ENCODE measurements at regions of chr11 and their contacts with region 1.

Region 1: GRCh38 chr11:117205211-117205818 is 6.1 kb downstream of the TAGLN start:
- DNase-seq: peak in 1 of 5 donors; percentile 42
- ATAC-seq: no peak
- H3K4me3 ChIP-seq: no peak overlapping the region
- H3K27ac ChIP-seq: peak overlapping the region in 5 of 12 donors; percentile 30 to 95 (median 62)
- H3K4me1 ChIP-seq: peaks cover 0 to 42% (median 15%) of the 10 kb centered on the region in 12 donors
- H3K27me3 ChIP-seq: no peaks in the 10 kb centered on the region
- CTCF ChIP-seq: no peak
- POLR2A ChIP-seq: no peak

Region 2: GRCh38 chr11:117127171-117127901 is 78.0 kb before region 1 on chr11:
- intact Hi-C with region 1: loop called in 5 of 10 experiments (anchors 2 to 5 kb)
- DNase-seq: no peak
- ATAC-seq: no peak
- H3K4me3 ChIP-seq: no peak overlapping the region
- H3K27ac ChIP-seq: no peak overlapping the region
- H3K4me1 ChIP-seq: no peaks in the 10 kb centered on the region
- H3K27me3 ChIP-seq: no peaks in the 10 kb centered on the region
- CTCF ChIP-seq: no peak
- POLR2A ChIP-seq: no peak

Region 3: GRCh38 chr11:117134431-117134830 is 70.9 kb before region 1 on chr11:
- intact Hi-C with region 1: loop called in 6 of 10 experiments (anchors 2 to 5 kb)
- DNase-seq: no peak
- ATAC-seq: no peak
- H3K4me3 ChIP-seq: no peak overlapping the region
- H3K27ac ChIP-seq: no peak overlapping the region
- H3K4me1 ChIP-seq: no peaks in the 10 kb centered on the region
- H3K27me3 ChIP-seq: no peaks in the 10 kb centered on the region
- CTCF ChIP-seq: no peak
- POLR2A ChIP-seq: no peak

Measured in heart left ventricle (tissue), 16 donors.